ENCODE measurements at regions of chr22 and their contacts with region 1.

Region 1: GRCh38 chr22:38941488-38941987 is 15.9 kb upstream of the APOBEC3A start:
- DNase-seq: peak; percentile 83
- H3K4me3 Mint-ChIP-seq: peak overlapping the region; percentile 39
- H3K27ac Mint-ChIP-seq: peak overlapping the region; percentile 83
- H3K4me1 Mint-ChIP-seq: peaks cover 36% of the 10 kb centered on the region
- H3K27me3 Mint-ChIP-seq: peaks cover 25% of the 10 kb centered on the region

Region 2: DNA sequence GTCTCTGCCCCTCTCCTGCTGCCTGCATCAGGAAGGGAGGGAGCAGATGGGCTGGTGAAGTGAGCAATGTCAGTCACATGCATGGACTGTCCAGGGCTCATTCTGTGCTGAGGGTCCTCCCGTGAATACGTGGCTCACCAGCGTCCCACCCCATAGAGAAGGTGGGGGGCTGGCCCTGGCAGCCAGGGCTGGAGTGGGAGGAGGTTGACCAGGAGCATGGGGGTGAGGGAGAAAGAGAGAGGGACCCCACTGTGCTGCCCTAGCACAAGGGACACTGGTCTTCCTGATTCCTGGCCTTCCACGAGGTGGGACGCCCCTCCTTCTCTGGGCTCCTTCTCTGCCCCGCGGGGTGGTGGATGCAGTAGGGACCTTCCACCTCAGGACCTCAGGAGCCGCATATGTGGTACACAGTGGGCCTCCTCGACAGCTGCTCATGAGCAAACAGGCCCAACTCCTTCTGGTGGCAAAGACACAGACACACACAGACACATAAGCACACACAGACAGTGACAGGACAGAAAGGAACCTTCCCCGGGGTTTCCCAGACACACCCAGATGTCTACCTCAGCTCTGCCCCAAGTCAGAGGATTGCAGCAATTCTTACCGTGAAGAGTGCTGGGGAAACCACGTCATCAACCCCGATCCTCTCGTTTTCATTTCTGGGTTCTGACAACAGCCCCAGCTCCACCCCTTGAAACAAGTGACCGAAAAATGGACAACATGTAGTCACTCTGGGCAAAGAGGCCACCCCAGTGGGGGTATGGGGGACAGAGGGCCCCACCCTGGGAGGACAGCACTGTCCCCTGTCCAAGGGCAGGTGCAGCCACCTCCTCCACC is 12.3 kb after region 1 on chr22:
- CTCF ChIA-PET with region 1: interaction called, 4 read pairs
- intact Hi-C with region 1: loop called (anchors 1 kb)
- DNase-seq: peak; percentile 94
- H3K4me3 Mint-ChIP-seq: peak overlapping the region; percentile 55
- H3K27ac Mint-ChIP-seq: peak overlapping the region; percentile 91
- H3K4me1 Mint-ChIP-seq: peaks cover 22% of the 10 kb centered on the region
- H3K27me3 Mint-ChIP-seq: no peaks in the 10 kb centered on the region